ENCODE measurements at regions of chr1 and their contacts with region 1.

Region 1: GRCh38 chr1:85259118-85259911 is at the start of gene C1orf52:
- DNase-seq: peak; percentile 87 to 92
- ATAC-seq: peak; percentile 94 to 96
- H3K4me3 ChIP-seq: peak within 1 kb of the TSS; percentile 91 to 96 (median 92)
- H3K27ac ChIP-seq: peak within 1 kb of the TSS; percentile 87 to 93 (median 90)
- H3K4me1 ChIP-seq: peaks cover 13 to 21% of the 10 kb centered on the region in 2 donors
- H3K27me3 ChIP-seq: no peaks in the 10 kb centered on the region
- CTCF ChIP-seq: peak; percentile 95 to 100 (median 97)
- POLR2A ChIP-seq: peak; percentile 62 to 74
- total RNA-seq, gene C1orf52: 11.1 to 20.8 (median 16.5) TPM

Region 2: DNA sequence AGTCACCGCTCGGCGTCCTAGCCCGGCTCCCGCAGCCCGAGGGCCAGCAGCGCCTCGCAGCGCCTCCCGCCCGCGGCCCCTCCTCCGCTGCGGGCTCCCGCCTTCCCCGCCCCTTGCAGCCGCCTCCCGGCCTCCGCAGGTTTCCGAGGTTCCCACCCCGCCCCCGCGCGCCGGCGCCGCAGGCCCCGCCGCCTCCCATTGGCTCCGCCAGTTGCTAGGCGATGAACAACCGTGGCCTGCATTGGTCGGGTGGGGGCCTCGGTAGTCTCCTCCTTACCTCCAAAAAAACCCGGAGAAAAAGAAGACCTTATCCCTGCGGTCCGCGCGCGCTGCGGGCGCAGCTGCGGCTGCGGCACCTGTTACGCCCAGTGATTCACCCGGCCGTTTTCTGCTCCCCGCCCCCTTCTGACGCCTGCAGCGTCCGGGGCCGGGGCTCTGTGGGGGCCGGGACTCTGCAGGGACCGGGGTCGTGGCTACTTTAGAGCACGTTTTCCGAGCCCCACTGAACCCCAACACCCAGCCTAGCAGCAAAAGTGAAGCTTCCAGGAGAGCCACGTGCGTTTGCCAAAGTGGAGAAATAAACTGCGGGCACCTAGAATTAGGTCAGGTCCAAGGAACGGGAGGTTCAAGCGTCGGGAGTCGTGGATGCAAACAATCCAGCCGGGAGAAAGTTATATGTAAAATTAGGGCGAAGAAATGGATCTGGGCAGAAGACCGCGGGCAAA is 568.8 kb before region 1 on chr1 and contains the start of gene SSX2IP:
- in situ Hi-C with region 1: loop called in 1 of 4 experiments (anchors 25 kb)
- intact Hi-C with region 1: no loop called
- DNase-seq: peak; percentile 97 to 99
- ATAC-seq: peak; percentile 97 to 98
- H3K4me3 ChIP-seq: peak within 1 kb of the TSS; percentile 87 to 96 (median 89)
- H3K27ac ChIP-seq: peak within 1 kb of the TSS; percentile 83 to 91 (median 86)
- H3K4me1 ChIP-seq: peaks cover 4 to 17% of the 10 kb centered on the region in 2 donors
- H3K27me3 ChIP-seq: no peaks in the 10 kb centered on the region
- CTCF ChIP-seq: no peak
- POLR2A ChIP-seq: peak; percentile 10 to 61
- total RNA-seq, gene SSX2IP: 3.5 to 7.0 (median 4.7) TPM

Region 3: GRCh38 chr1:84944767-84945486 is 314.4 kb before region 1 on chr1:
- in situ Hi-C with region 1: loop called (anchors 5 to 10 kb)
- intact Hi-C with region 1: loop called (anchors 1 kb)
- DNase-seq: peak; percentile 44 to 52
- ATAC-seq: peak; percentile 98 to 99
- H3K4me3 ChIP-seq: peak overlapping the region; percentile 38 to 58 (median 52)
- H3K27ac ChIP-seq: peak overlapping the region in 3 of 4 donors; percentile 28 to 47 (median 35)
- H3K4me1 ChIP-seq: peaks cover 0 to 6% of the 10 kb centered on the region in 2 donors
- H3K27me3 ChIP-seq: no peaks in the 10 kb centered on the region
- CTCF ChIP-seq: peak; percentile 68 to 90 (median 85)
- POLR2A ChIP-seq: no peak

Region 4: DNA sequence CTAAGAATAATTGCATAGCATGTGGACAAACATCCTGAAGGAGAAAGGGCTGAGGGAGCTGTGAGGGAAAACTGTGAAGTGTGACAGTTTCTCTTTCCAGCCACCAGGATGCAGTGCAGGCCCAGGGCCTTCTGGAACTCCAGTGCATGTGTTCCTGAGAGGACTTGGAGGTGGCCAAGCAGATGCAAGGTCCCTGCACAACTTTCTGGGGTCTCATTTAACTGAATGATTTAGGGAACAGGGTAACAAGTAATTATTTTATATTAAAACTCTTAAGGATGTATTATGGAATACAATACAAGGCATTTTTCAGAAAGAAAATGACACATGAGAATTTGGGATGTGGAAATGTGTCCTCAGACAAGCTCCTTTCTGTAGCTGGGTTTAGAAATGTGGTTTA is 149.8 kb before region 1 on chr1:
- in situ Hi-C with region 1: loop called in 2 of 4 experiments (anchors 10 kb)
- intact Hi-C with region 1: loop called (anchors 1 kb)
- DNase-seq: peak; percentile 8 to 19
- ATAC-seq: peak in 1 of 2 donors; percentile 79
- H3K4me3 ChIP-seq: no peak overlapping the region
- H3K27ac ChIP-seq: no peak overlapping the region
- H3K4me1 ChIP-seq: no peaks in the 10 kb centered on the region
- H3K27me3 ChIP-seq: no peaks in the 10 kb centered on the region
- CTCF ChIP-seq: peak; percentile 30 to 70 (median 53)
- POLR2A ChIP-seq: no peak

Region 5: DNA sequence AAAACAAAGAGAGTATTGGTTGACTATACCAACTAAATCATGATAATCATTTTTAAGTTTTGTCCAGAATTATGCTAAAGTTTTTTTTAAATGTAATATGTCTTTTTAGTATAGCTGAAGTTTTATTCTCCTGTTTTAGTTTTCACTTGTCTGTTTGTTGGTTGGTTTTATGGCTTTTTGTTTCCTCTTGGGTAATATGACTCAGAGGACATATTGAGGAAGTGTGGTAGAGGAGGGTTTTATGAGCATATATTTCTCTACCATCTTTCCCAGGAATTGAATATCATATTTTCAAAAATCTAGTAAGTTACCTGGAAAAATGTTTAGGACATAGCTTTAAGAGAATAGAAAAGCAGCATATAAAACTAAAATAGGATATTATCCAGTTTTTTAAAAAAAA is 142.5 kb before region 1 on chr1:
- in situ Hi-C with region 1: loop called in 2 of 4 experiments (anchors 10 kb)
- intact Hi-C with region 1: no loop called
- DNase-seq: no peak
- ATAC-seq: no peak
- H3K4me3 ChIP-seq: no peak overlapping the region
- H3K27ac ChIP-seq: no peak overlapping the region
- H3K4me1 ChIP-seq: no peaks in the 10 kb centered on the region
- H3K27me3 ChIP-seq: no peaks in the 10 kb centered on the region
- CTCF ChIP-seq: no peak
- POLR2A ChIP-seq: no peak

Region 6: DNA sequence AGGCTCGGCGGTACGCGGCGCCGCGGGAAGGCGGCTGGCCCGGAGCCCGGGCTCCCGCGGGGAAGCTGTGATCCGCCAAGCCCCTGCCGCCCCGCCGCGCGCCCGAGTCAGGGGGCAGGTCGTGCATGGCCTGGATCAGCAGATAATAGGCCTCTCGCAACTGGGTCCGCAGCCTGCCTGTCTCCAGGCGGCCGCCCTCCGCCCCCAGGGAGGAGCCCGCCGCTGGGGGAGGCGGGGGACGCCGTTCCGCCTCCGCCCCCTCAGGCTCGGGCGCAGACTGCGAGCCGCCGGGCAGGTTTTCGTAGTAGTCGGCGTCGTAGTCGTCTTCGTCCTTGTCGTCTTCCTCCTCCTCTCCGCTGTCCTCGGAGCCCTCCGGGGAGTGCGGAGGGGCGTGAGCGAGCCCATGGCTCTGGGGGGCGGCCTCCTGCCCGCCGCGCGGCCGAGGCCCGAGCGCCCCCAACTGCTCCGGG is 58.4 kb before region 1 on chr1 and contains the start of gene SYDE2:
- in situ Hi-C with region 1: no loop called
- intact Hi-C with region 1: loop called (anchors 2 kb)
- DNase-seq: peak; percentile 38 to 60
- ATAC-seq: peak; percentile 77 to 79
- H3K4me3 ChIP-seq: peak within 1 kb of the TSS; percentile 76 to 96 (median 78)
- H3K27ac ChIP-seq: peak within 1 kb of the TSS; percentile 86 to 95 (median 94)
- H3K4me1 ChIP-seq: peaks cover 11 to 17% of the 10 kb centered on the region in 2 donors
- H3K27me3 ChIP-seq: no peaks in the 10 kb centered on the region
- CTCF ChIP-seq: no peak
- POLR2A ChIP-seq: peak; percentile 41 to 60
- total RNA-seq, gene SYDE2: 3.8 to 7.2 (median 4.9) TPM

Region 7: GRCh38 chr1:85220756-85221201 is 38.5 kb before region 1 on chr1:
- in situ Hi-C with region 1: no loop called
- intact Hi-C with region 1: no loop called
- DNase-seq: no peak
- ATAC-seq: no peak
- H3K4me3 ChIP-seq: no peak overlapping the region
- H3K27ac ChIP-seq: no peak overlapping the region
- H3K4me1 ChIP-seq: peaks cover 7 to 9% of the 10 kb centered on the region in 2 donors
- H3K27me3 ChIP-seq: no peaks in the 10 kb centered on the region
- CTCF ChIP-seq: no peak
- POLR2A ChIP-seq: no peak

Region 8: DNA sequence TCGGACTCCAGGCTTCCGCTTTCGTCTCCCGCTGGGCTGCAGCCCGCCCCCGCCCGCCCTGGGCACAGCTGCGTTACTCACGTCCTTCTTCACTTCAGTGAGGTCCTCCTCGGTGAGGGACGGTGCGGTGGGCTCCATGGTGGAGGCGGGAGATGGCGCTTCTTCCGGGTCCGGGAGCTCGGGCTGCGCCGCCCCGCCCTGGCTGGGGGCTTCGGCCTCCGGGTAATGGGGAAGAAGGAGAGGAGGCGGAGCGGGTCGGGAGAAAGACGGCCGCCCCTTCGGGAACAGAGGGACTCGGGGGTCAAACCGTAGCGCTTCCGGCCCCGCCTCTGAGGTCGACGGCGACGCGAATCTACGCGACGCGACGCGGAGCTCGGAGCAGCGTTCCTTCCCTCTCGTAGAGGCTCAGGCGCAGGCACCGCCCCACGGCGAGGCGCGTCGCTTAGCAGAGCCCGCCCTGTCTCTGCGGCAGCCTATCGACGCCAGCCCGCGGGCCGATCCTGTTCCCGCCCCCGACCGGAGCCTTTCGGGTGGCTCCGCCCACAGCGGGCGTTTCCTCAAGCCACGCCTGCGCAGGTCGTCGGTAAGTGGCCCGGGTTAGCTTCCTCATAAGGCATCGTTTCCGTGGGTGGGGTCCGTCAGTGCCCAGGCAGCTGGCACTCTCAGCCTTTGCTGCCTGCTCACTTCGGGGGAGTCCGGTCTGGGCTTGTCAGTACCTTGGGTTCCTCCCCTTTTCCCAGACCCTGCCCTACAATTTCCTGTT is 17.1 kb after region 1 on chr1 and contains the start of gene BCL10:
- in situ Hi-C with region 1: no loop called
- intact Hi-C with region 1: loop called (anchors 1 kb)
- DNase-seq: peak; percentile 97 to 98
- ATAC-seq: peak; percentile 84 to 87
- H3K4me3 ChIP-seq: peak within 1 kb of the TSS; percentile 83 to 99 (median 93)
- H3K27ac ChIP-seq: peak within 1 kb of the TSS; percentile 96 to 99 (median 98)
- H3K4me1 ChIP-seq: peaks cover 23 to 27% of the 10 kb centered on the region in 2 donors
- H3K27me3 ChIP-seq: no peaks in the 10 kb centered on the region
- CTCF ChIP-seq: no peak
- POLR2A ChIP-seq: peak; percentile 91 to 92
- total RNA-seq, gene BCL10: 4.3 to 6.4 (median 5.4) TPM

Region 9: GRCh38 chr1:85289207-85289847 is 30.0 kb after region 1 on chr1:
- in situ Hi-C with region 1: no loop called
- intact Hi-C with region 1: no loop called
- DNase-seq: no peak
- ATAC-seq: no peak
- H3K4me3 ChIP-seq: no peak overlapping the region
- H3K27ac ChIP-seq: no peak overlapping the region
- H3K4me1 ChIP-seq: no peaks in the 10 kb centered on the region
- H3K27me3 ChIP-seq: no peaks in the 10 kb centered on the region
- CTCF ChIP-seq: no peak
- POLR2A ChIP-seq: no peak